ENCODE measurements at regions of chr19 and their contacts with region 1.

Region 1: GRCh38 chr19:33430674-33431277 is 57.3 kb downstream of the CEBPG start:
- DNase-seq: peak; percentile 80 to 93
- ATAC-seq: peak; percentile 90 to 98
- H3K4me3 ChIP-seq: no peak overlapping the region
- H3K27ac ChIP-seq: no peak overlapping the region
- H3K4me1 ChIP-seq: no peaks in the 10 kb centered on the region
- CTCF ChIP-seq: peak; percentile 98
- EP300 ChIP-seq: no peak
- POLR2A ChIP-seq: no peak
- RAD21 ChIP-seq: peak; percentile 90 to 95

Region 2: DNA sequence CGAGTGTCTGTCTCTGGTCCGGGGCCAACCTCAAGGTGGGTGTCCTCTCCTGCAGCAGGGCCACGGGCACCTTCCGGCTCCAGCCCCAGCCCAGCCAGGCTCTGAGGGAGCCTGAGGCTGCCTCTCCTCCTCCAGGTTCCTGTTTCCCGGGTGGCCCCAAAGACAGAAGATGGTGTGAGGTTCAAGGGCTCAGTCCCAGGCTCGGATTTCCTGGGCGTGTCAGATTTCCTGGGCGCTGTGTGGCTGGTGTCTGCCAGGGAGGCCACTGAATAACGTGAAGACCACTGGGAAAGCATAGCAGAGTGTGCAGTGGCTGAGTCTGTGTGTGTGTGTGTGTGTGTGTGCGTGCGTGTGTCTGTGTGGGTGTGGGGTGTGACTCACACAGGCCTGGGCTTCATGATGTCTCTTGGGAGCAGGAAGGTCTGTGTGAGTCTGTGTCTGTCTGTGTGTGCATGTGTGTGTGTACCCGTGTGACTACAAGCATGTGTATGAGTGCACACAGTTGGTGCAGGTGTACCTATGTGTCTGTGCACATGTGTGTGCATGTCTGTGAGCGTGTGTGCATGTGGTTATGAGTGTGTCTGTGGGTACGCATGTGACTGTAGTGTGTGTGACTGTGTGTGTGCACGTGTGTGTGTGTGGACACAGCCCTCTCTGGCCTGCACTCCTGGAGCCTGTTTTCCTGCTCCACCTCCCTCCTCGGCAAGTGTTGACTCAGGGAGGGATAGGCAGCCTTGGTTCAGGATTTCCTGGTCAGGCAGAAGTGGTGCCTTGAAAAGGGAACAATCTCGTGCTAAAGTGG is 156.7 kb before region 1 on chr19:
- CTCF ChIA-PET with region 1: no interaction called
- POLR2A ChIA-PET with region 1: no interaction called
- DNase-seq: peak in 1 of 2 experiments; percentile 80
- ATAC-seq: peak; percentile 42 to 66
- H3K4me3 ChIP-seq: no peak overlapping the region
- H3K27ac ChIP-seq: peak overlapping the region; percentile 43 to 76
- H3K4me1 ChIP-seq: peaks cover 29% of the 10 kb centered on the region
- CTCF ChIP-seq: no peak
- EP300 ChIP-seq: no peak
- POLR2A ChIP-seq: no peak
- RAD21 ChIP-seq: no peak

Region 3: DNA sequence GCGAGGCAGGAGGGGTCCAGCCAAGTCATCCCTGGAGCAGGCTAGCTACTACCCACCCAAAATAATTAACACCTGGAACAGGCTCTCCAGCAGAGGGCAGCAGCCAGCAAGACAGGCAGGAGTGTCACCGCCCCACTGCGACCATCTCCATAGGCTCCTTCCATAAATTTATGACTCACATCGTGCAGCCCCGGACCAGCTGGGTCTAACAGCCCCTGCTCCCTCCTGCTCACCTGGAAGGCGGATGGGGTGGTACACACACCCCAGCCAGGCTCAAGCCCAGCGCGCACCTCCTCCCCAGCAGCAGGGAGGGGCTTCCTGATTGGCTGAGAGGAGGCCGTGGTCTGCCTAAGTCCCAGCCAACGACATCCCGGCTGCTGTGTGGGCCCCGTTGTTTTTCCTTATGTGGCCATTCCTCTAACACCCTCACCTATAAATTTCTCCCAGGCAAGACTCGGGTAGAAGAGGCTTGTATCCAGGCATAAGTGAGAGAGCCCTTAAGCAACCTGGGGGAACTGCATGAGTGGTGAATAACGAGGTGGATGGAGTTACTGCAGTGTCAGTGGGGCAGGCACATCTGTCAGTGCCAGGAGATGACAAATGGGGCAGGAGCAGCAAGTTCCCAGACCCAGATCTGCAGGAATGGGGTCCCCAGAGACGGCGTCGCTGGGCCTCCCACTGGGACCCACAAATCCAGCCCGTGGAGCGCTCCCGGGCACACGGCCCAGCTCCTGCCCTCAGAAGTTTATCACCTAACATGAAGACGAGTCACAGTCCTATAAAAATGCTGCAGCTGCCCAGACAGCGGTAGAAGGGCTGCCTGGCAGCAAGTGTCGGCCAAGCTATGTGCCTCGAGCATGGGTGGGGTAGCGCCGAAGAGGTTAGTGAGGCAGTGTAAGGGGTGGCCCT is 14.2 kb before region 1 on chr19:
- CTCF ChIA-PET with region 1: interaction called, 253 read pairs
- POLR2A ChIA-PET with region 1: no interaction called
- DNase-seq: peak; percentile 84 to 99
- ATAC-seq: peak; percentile 64 to 92
- H3K4me3 ChIP-seq: no peak overlapping the region
- H3K27ac ChIP-seq: no peak overlapping the region
- H3K4me1 ChIP-seq: no peaks in the 10 kb centered on the region
- CTCF ChIP-seq: peak; percentile 98
- EP300 ChIP-seq: no peak
- POLR2A ChIP-seq: no peak
- RAD21 ChIP-seq: peak; percentile 85 to 91

Region 4: DNA sequence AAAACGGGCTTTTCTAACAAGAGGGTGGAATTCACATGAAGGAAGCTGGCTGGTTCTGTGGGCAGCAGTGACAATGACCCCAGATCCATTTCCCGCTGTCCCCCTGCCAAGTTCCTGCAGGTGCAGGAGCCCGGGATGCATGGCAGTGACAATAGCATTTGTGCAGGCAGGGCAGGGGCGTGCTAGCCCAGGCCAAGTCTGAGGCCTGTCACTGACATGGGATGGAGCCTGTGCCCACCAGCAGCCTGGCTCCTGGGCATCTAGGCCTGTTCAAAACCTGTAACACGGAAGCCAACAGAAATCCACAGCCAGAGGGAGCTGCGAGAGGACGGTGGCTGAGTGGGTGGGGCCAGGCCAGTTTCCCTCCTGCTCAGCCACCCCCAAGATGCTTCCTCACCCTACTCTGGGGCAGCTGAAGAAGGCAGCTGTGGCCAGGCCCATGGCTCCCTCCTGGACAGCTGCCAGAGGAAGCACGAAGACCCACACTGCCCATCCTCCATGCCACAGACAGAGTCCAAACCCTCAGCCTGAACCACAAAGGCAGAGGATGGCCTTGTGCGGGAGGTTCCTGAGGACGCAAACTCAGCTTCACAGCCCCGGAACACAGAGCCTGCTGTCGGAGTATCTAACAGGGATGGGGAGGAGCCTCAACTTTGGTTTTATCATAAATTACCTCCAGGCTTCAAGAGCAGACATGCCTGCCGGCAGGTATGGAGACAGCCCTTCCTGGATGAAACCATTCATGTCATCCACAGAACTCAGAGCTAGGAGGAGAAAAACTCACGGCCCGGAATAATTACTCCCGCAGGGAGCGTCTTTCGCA is 16.8 kb after region 1 on chr19:
- CTCF ChIA-PET with region 1: interaction called, 12 read pairs
- POLR2A ChIA-PET with region 1: no interaction called
- DNase-seq: no peak
- ATAC-seq: peak in 1 of 2 experiments; percentile 17; a peak in 1 of 6 replicates
- H3K4me3 ChIP-seq: no peak overlapping the region
- H3K27ac ChIP-seq: no peak overlapping the region
- H3K4me1 ChIP-seq: no peaks in the 10 kb centered on the region
- CTCF ChIP-seq: no peak
- EP300 ChIP-seq: no peak
- POLR2A ChIP-seq: no peak
- RAD21 ChIP-seq: no peak

Region 5: GRCh38 chr19:33453265-33453664 is 22.5 kb after region 1 on chr19:
- CTCF ChIA-PET with region 1: interaction called, 13 read pairs
- POLR2A ChIA-PET with region 1: no interaction called
- DNase-seq: no peak
- ATAC-seq: no peak
- H3K4me3 ChIP-seq: no peak overlapping the region
- H3K27ac ChIP-seq: no peak overlapping the region
- H3K4me1 ChIP-seq: no peaks in the 10 kb centered on the region
- CTCF ChIP-seq: no peak
- EP300 ChIP-seq: no peak
- POLR2A ChIP-seq: no peak
- RAD21 ChIP-seq: no peak

Region 6: GRCh38 chr19:33459222-33460090 is 28.7 kb after region 1 on chr19:
- CTCF ChIA-PET with region 1: interaction called, 13 read pairs
- POLR2A ChIA-PET with region 1: no interaction called
- DNase-seq: no peak
- ATAC-seq: no peak
- H3K4me3 ChIP-seq: no peak overlapping the region
- H3K27ac ChIP-seq: no peak overlapping the region
- H3K4me1 ChIP-seq: no peaks in the 10 kb centered on the region
- CTCF ChIP-seq: no peak
- EP300 ChIP-seq: no peak
- POLR2A ChIP-seq: no peak
- RAD21 ChIP-seq: no peak

Region 7: DNA sequence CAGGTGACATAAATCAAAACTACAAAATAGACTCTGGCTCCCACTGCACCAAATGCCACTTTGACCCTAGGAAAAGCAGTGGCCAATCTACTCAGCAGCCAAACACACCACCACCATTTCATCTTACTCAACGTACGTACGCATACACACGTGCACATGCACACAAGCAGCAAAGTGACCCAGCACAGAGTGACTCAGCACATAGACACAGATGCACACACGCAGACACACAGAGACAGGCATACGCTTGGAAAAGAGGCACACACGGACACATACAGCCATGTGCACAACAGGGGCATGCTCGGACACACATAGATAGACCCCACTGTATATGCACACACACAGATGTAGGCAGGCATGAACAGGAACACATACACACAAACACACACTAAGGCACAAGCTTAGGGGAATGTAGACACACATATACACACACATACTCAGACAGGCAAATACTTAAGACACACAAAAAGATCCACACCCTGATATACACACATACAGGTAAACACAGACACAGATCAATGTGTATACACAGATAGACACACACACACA is 53.5 kb after region 1 on chr19:
- CTCF ChIA-PET with region 1: no interaction called
- POLR2A ChIA-PET with region 1: no interaction called
- DNase-seq: no peak
- ATAC-seq: no peak
- H3K4me3 ChIP-seq: no peak overlapping the region
- H3K27ac ChIP-seq: no peak overlapping the region
- H3K4me1 ChIP-seq: no peaks in the 10 kb centered on the region
- CTCF ChIP-seq: no peak
- EP300 ChIP-seq: no peak
- POLR2A ChIP-seq: no peak
- RAD21 ChIP-seq: no peak

Region 8: GRCh38 chr19:33521480-33522370 is 90.9 kb after region 1 on chr19 and contains the start of gene PEPD:
- CTCF ChIA-PET with region 1: interaction called, 10 read pairs
- POLR2A ChIA-PET with region 1: no interaction called
- DNase-seq: peak; percentile 93 to 100
- ATAC-seq: peak; percentile 85 to 94
- H3K4me3 ChIP-seq: peak within 1 kb of the TSS; percentile 91
- H3K27ac ChIP-seq: peak within 1 kb of the TSS; percentile 76 to 86
- H3K4me1 ChIP-seq: peaks cover 7% of the 10 kb centered on the region
- CTCF ChIP-seq: no peak
- EP300 ChIP-seq: peak in 1 of 2 experiments; percentile 29; a peak in 1 of 5 replicates
- POLR2A ChIP-seq: peak; percentile 98
- RAD21 ChIP-seq: no peak
- polyA plus RNA-seq, gene PEPD: 85.5 and 99.5 TPM in 2 replicates

Region 9: GRCh38 chr19:33727331-33727998 is 296.7 kb after region 1 on chr19:
- CTCF ChIA-PET with region 1: interaction called, 10 read pairs
- POLR2A ChIA-PET with region 1: no interaction called
- DNase-seq: no peak
- ATAC-seq: no peak; a peak in 2 of 6 replicates
- H3K4me3 ChIP-seq: no peak overlapping the region
- H3K27ac ChIP-seq: no peak overlapping the region
- H3K4me1 ChIP-seq: no peaks in the 10 kb centered on the region
- CTCF ChIP-seq: no peak
- EP300 ChIP-seq: no peak
- POLR2A ChIP-seq: no peak
- RAD21 ChIP-seq: no peak

Measured in A549 (cell line).